Stomach (tissue), 19 donors: ENCODE measurements at regions of chr10 and their contacts with region 1.

Region 1: GRCh38 chr10:38094158-38094920 is at the start of gene ZNF37A:
- DNase-seq: peak; percentile 95 to 99
- H3K4me3 ChIP-seq: peak within 1 kb of the TSS; percentile 79 to 90 (median 82)
- H3K27ac ChIP-seq: peak within 1 kb of the TSS; percentile 89 to 94 (median 90)
- H3K4me1 ChIP-seq: peaks cover 6 to 21% (median 19%) of the 10 kb centered on the region in 4 donors
- H3K27me3 ChIP-seq: no peaks in the 10 kb centered on the region
- CTCF ChIP-seq: peak in 1 of 7 experiments; percentile 23
- EP300 ChIP-seq: no peak
- POLR2A ChIP-seq: peak in 1 of 4 donors; percentile 32
- total RNA-seq, gene ZNF37A: 4.3 to 41.2 (median 33.2) TPM

Region 2: GRCh38 chr10:37857287-37858211 is 236.8 kb before region 1 on chr10 and contains the start of gene ZNF248:
- intact Hi-C with region 1: loop called (anchors 10 kb)
- DNase-seq: peak; percentile 97 to 99
- H3K4me3 ChIP-seq: peak within 1 kb of the TSS; percentile 66 to 89 (median 74)
- H3K27ac ChIP-seq: peak within 1 kb of the TSS; percentile 96 to 100 (median 98)
- H3K4me1 ChIP-seq: peaks cover 11 to 38% (median 25%) of the 10 kb centered on the region in 4 donors
- H3K27me3 ChIP-seq: no peaks in the 10 kb centered on the region
- CTCF ChIP-seq: no peak
- EP300 ChIP-seq: peak; percentile 19
- POLR2A ChIP-seq: peak in 2 of 4 donors; percentile 91 to 97
- total RNA-seq, gene ZNF248: 8.2 to 32.9 (median 15.5) TPM

Region 3: GRCh38 chr10:38007991-38008390 is 86.3 kb before region 1 on chr10:
- intact Hi-C with region 1: loop called (anchors 10 kb)
- DNase-seq: peak in 1 of 2 donors; percentile 44
- H3K4me3 ChIP-seq: no peak overlapping the region
- H3K27ac ChIP-seq: no peak overlapping the region
- H3K4me1 ChIP-seq: peaks cover 9 to 28% (median 17%) of the 10 kb centered on the region in 4 donors
- H3K27me3 ChIP-seq: no peaks in the 10 kb centered on the region
- CTCF ChIP-seq: no peak
- EP300 ChIP-seq: no peak
- POLR2A ChIP-seq: no peak